Breast epithelium (tissue), 4 donors: ENCODE measurements at regions of chr16 and their contacts with region 1.

Region 1: GRCh38 chr16:8644211-8645140 is 23.0 kb downstream of the METTL22 start:
- DNase-seq: no peak
- H3K4me3 ChIP-seq: no peak overlapping the region
- H3K27ac ChIP-seq: no peak overlapping the region
- H3K4me1 ChIP-seq: no peaks in the 10 kb centered on the region
- H3K27me3 ChIP-seq: no peaks in the 10 kb centered on the region
- CTCF ChIP-seq: no peak
- POLR2A ChIP-seq: no peak

Region 2: GRCh38 chr16:8686879-8687278 is 42.4 kb after region 1 on chr16:
- intact Hi-C with region 1: no loop called
- DNase-seq: no peak
- H3K4me3 ChIP-seq: no peak overlapping the region
- H3K27ac ChIP-seq: no peak overlapping the region
- H3K4me1 ChIP-seq: peaks cover 0 to 9% of the 10 kb centered on the region in 2 donors
- H3K27me3 ChIP-seq: no peaks in the 10 kb centered on the region
- CTCF ChIP-seq: no peak
- POLR2A ChIP-seq: no peak

Region 3: GRCh38 chr16:8885674-8886592 is 241.5 kb after region 1 on chr16:
- intact Hi-C with region 1: loop called (anchors 10 kb)
- DNase-seq: no peak
- H3K4me3 ChIP-seq: peak overlapping the region in 1 of 3 donors; percentile 15
- H3K27ac ChIP-seq: no peak overlapping the region
- H3K4me1 ChIP-seq: peaks cover 0 to 6% of the 10 kb centered on the region in 2 donors
- H3K27me3 ChIP-seq: no peaks in the 10 kb centered on the region
- CTCF ChIP-seq: no peak
- POLR2A ChIP-seq: no peak